Activated CD8-positive, alpha-beta T cell treated with anti-CD3 and anti-CD28 coated beads for 36 hours (primary cell): ENCODE measurements at regions of chr17 and their contacts with region 1.

Region 1: GRCh38 chr17:48024937-48025906 is 12.4 kb downstream of the COPZ2 start:
- DNase-seq: peak; percentile 98
- ATAC-seq: peak; percentile 90
- H3K4me3 Mint-ChIP-seq: peak overlapping the region; percentile 79
- H3K27ac Mint-ChIP-seq: no peak overlapping the region
- H3K4me1 Mint-ChIP-seq: peaks cover 28% of the 10 kb centered on the region
- H3K27me3 Mint-ChIP-seq: peaks cover 29% of the 10 kb centered on the region
- CTCF ChIP-seq: peak; percentile 74

Region 2: DNA sequence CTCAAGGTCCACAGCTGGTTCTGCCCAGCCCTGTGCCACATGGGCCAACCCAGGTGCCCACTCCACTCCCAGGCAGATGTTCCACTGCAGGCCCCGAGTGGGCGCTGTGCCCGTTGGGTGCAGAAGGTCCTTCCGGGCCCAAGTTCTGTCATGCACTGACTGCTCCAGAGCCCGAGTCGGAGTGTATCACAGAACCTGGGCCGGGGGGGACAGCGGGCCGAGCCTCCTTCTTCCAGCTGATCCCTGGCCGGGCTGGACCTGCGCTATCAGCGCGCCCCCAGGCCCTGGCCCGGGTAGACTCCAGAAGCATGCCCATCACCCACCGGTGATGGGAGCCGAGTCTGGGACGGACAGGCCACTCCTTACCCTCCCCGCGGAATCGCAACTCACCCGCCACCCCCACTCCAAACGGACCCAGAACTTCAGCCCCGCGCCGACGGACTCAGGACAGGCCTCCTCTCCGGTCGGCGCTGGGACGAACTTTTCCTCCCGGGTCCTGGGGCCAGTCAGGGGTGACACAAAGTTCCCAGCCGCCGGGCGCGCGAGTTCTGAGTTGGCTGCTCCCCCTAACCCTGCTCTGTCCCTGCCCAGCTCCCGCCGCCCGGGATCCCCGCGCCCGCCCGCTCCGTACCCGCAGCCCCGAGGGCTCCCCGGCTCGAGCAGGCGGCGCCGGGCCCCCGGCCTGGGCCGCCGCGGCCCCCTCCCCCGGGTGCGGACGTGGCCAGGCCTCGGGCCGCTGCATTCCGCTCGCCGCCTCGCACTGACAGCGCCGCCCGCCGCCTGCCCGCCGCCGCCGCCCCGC is 12.0 kb after region 1 on chr17 and contains the start of gene COPZ2:
- CTCF ChIA-PET with region 1: interaction called, 101 read pairs
- POLR2A ChIA-PET with region 1: interaction called, 3 read pairs
- intact Hi-C with region 1: no loop called
- DNase-seq: peak; percentile 74
- ATAC-seq: peak; percentile 92
- H3K4me3 Mint-ChIP-seq: peak within 1 kb of the TSS; percentile 72
- H3K27ac Mint-ChIP-seq: peak within 1 kb of the TSS; percentile 58
- H3K4me1 Mint-ChIP-seq: peaks cover 8% of the 10 kb centered on the region
- H3K27me3 Mint-ChIP-seq: peaks cover 29% of the 10 kb centered on the region
- CTCF ChIP-seq: peak; percentile 83
- total RNA-seq, gene COPZ2: 4.3 to 4.6 TPM

Region 3: GRCh38 chr17:48054238-48055185 is 29.3 kb after region 1 on chr17:
- CTCF ChIA-PET with region 1: interaction called, 101 read pairs
- POLR2A ChIA-PET with region 1: interaction called, 4 read pairs
- intact Hi-C with region 1: no loop called
- DNase-seq: no peak
- ATAC-seq: no peak
- H3K4me3 Mint-ChIP-seq: peak overlapping the region; percentile 61
- H3K27ac Mint-ChIP-seq: peak overlapping the region; percentile 99
- H3K4me1 Mint-ChIP-seq: peaks cover 64% of the 10 kb centered on the region
- H3K27me3 Mint-ChIP-seq: no peaks in the 10 kb centered on the region
- CTCF ChIP-seq: no peak

Region 4: DNA sequence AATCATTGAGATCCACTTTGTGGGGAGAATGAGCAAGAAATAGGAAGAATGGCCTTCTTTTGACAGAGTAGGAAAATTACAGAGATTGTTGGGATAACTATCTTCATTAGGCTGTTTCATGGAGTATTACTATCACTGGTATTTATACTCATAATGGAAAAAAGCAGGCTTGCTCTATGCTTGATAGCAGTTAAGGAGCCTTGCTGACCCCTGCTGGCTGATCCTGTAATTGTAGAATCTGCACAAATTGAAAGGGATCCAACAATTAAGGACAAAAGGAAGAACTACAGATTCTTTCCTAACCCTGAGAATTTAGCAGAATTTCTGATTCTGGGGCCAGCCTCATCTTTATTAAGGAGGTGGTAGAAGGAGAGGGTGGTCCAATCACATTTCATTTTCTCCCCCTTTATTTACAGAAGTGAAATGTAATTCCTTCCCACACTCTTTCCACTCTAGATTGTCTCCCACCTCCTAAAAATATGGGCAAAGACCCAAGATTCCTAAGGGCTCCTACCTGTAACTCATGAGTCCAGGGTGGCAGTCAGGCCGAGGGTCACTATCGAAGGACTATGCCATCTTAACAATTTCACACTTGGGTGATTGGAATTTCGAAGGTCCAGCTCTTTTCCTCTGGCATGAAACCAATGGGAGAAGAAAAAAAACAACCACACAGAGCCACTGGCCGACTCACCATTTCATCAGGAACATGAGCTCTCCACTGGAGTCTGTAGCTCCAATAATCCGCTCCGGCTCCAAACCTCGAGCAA is 49.3 kb after region 1 on chr17:
- CTCF ChIA-PET with region 1: interaction called, 283 read pairs
- POLR2A ChIA-PET with region 1: interaction called, 10 read pairs
- intact Hi-C with region 1: loop called (anchors 1 kb)
- DNase-seq: peak; percentile 89
- ATAC-seq: peak; percentile 90
- H3K4me3 Mint-ChIP-seq: no peak overlapping the region
- H3K27ac Mint-ChIP-seq: no peak overlapping the region
- H3K4me1 Mint-ChIP-seq: no peaks in the 10 kb centered on the region
- H3K27me3 Mint-ChIP-seq: no peaks in the 10 kb centered on the region
- CTCF ChIP-seq: peak; percentile 79

Region 5: DNA sequence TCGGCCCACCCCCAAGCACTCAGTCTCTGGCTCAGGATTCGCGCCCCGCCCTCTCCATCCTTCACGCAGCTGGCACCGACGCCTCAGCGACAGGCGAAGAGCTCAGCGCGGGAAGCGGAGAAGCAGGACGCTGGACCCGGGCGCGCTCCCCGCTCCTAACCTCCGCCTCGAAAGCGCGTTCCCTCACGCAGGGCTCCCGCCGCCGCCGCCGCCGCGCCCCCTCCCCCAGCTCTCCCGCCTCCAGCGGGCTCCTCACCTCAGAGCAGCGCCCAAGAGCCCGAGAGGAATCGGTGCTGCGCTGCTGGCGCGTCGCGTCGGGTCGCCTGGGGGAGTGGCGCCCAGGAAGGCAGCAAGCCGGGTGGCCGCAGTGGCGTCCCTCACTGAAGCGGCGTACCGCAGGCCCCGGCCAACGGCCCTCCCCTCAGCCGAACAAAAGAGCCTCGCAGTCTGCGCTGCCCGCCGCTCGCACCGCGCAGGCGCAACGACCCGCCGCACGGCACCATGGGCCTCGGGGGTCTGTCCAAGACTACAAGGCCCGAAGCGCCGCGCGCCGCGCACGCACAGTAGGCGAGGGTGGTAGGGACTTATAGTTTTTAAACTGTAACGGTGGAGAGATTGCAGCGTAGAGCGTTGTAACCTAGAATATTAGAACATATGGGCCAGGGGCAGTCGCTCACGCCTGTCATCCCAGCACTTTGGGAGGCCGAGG is 75.9 kb after region 1 on chr17 and contains the start of gene CBX1:
- CTCF ChIA-PET with region 1: interaction called, 31 read pairs
- POLR2A ChIA-PET with region 1: no interaction called
- intact Hi-C with region 1: no loop called
- DNase-seq: peak; percentile 98
- ATAC-seq: peak; percentile 95
- H3K4me3 Mint-ChIP-seq: peak within 1 kb of the TSS; percentile 98
- H3K27ac Mint-ChIP-seq: peak within 1 kb of the TSS; percentile 91
- H3K4me1 Mint-ChIP-seq: peaks cover 40% of the 10 kb centered on the region
- H3K27me3 Mint-ChIP-seq: no peaks in the 10 kb centered on the region
- CTCF ChIP-seq: no peak
- total RNA-seq, gene CBX1: 52.3 to 53.0 TPM

Region 6: GRCh38 chr17:48113201-48113676 is 88.0 kb after region 1 on chr17:
- CTCF ChIA-PET with region 1: interaction called, 19 read pairs
- POLR2A ChIA-PET with region 1: no interaction called
- intact Hi-C with region 1: no loop called
- DNase-seq: peak; percentile 73
- ATAC-seq: peak; percentile 75
- H3K4me3 Mint-ChIP-seq: peak overlapping the region; percentile 54
- H3K27ac Mint-ChIP-seq: peak overlapping the region; percentile 90
- H3K4me1 Mint-ChIP-seq: peaks cover 44% of the 10 kb centered on the region
- H3K27me3 Mint-ChIP-seq: no peaks in the 10 kb centered on the region
- CTCF ChIP-seq: no peak